ENCODE measurements at regions of chr10 and their contacts with region 1.

Region 1: GRCh38 chr10:23158370-23158769 is 33.7 kb upstream of the PTF1A start:
- DNase-seq: peak; percentile 79
- H3K27ac ChIP-seq: no peak overlapping the region
- CTCF ChIP-seq: peak; percentile 87

Region 2: DNA sequence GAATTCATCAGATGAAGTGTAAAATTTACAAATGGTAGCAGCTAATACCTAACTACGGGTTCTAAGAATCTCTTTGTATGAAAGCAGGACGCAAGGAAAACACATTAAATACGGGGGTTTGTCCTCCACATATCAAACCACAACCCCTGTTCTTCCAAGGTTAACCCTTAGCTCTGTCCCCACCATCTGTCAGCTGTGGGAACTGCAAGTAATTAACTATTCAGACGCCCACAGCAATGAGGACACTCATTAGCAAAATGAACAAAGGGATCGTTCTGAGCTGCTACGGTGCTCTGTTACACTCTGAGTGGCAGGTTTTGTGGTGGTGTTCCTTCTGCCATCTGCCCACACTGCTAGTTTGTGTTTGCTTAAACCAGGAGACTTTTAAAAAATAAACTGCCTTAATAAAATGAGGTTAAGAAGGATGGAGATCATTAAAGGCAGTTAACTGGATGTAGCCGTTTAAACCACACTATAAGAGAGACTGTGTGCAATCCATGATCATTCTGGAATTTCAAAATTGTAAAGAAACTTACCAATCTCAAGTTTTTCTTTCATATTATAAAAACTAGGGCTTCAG is 134.9 kb after region 1 on chr10:
- CTCF ChIA-PET with region 1: interaction called, 13 read pairs
- POLR2A ChIA-PET with region 1: no interaction called
- DNase-seq: peak; percentile 38
- H3K27ac ChIP-seq: no peak overlapping the region
- CTCF ChIP-seq: peak; percentile 72